ENCODE measurements at regions of chr11 and their contacts with region 1.

Region 1: GRCh38 chr11:118610804-118611795 is 3.7 kb downstream of the PHLDB1 start:
- DNase-seq: no peak
- H3K4me3 ChIP-seq: peak overlapping the region; percentile 68
- H3K27me3 ChIP-seq: no peaks in the 10 kb centered on the region
- CTCF ChIP-seq: peak; percentile 85

Region 2: GRCh38 chr11:118592616-118593367 is 18.3 kb before region 1 on chr11:
- CTCF ChIA-PET with region 1: interaction called, 78 read pairs
- POLR2A ChIA-PET with region 1: no interaction called
- DNase-seq: no peak
- H3K4me3 ChIP-seq: no peak overlapping the region
- H3K27me3 ChIP-seq: no peaks in the 10 kb centered on the region
- CTCF ChIP-seq: no peak

Region 3: DNA sequence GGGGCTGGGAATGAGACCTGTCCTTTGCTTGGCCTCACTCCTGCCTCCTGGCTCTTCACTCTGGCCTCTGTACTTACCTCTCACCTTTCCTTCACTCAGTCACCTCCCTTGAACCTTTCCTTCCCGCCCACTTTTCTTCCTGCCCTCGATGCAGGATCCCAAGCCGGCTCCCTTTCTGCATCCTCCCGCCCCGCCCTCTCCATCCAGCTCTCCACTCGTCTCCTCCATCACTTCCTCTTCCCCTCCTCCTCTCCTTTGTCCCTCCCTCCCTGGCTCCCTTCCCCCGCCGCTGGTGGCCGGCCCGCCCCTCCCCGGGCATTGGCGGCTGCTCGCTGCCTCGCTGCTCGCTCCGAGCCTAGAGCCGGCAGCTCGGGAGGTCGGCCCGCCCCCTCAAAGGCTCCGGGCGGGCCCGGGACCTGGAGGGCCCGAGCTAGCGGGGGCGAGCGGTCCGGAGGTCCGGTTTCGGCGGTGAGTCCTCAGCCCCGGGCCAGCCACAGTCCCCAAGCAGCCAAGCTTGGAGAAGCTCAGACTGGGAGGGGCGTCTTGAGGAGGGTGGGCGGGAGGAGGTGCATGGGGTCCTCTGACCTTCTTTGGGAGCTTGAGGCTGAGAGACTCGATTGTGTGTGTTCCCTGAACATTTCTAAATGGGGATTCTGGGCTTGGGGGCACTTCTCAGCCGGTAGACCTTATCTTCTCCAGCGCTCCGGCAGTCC is 10.1 kb after region 1 on chr11:
- CTCF ChIA-PET with region 1: interaction called, 71 read pairs
- POLR2A ChIA-PET with region 1: interaction called, 20 read pairs
- DNase-seq: no peak
- H3K4me3 ChIP-seq: peak overlapping the region; percentile 63
- H3K27me3 ChIP-seq: no peaks in the 10 kb centered on the region
- CTCF ChIP-seq: no peak

Measured in BJ (cell line).